SK-N-SH (cell line): ENCODE measurements at regions of chr2 and their contacts with region 1.

Region 1: GRCh38 chr2:71798266-71799012 is 345.1 kb downstream of the DYSF start:
- DNase-seq: peak; percentile 64
- H3K4me3 ChIP-seq: no peak overlapping the region
- H3K27ac ChIP-seq: no peak overlapping the region
- H3K4me1 ChIP-seq: peaks cover 0 to 10% of the 10 kb centered on the region in 2 experiments; a peak in 1 of 4 replicates
- H3K27me3 ChIP-seq: no peaks in the 10 kb centered on the region
- CTCF ChIP-seq: peak; percentile 78
- EP300 ChIP-seq: no peak
- RAD21 ChIP-seq: peak; percentile 61

Region 2: GRCh38 chr2:71545572-71546274 is 252.7 kb before region 1 on chr2:
- CTCF ChIA-PET with region 1: interaction called, 33 read pairs
- POLR2A ChIA-PET with region 1: no interaction called
- DNase-seq: peak; percentile 82
- H3K4me3 ChIP-seq: peak overlapping the region; percentile 12 to 19; a peak in 2 of 4 replicates
- H3K27ac ChIP-seq: no peak overlapping the region
- H3K4me1 ChIP-seq: no peaks in the 10 kb centered on the region; a peak in 1 of 4 replicates
- H3K27me3 ChIP-seq: no peaks in the 10 kb centered on the region; the same call in 1 of the 2 replicates
- CTCF ChIP-seq: peak; percentile 81
- EP300 ChIP-seq: no peak
- RAD21 ChIP-seq: peak; percentile 97

Region 3: GRCh38 chr2:71558300-71559051 is 240.0 kb before region 1 on chr2:
- CTCF ChIA-PET with region 1: interaction called, 13 read pairs
- POLR2A ChIA-PET with region 1: no interaction called
- DNase-seq: no peak
- H3K4me3 ChIP-seq: no peak overlapping the region
- H3K27ac ChIP-seq: no peak overlapping the region
- H3K4me1 ChIP-seq: peaks cover 0 to 29% of the 10 kb centered on the region in 2 experiments; a peak in 1 of 4 replicates
- H3K27me3 ChIP-seq: peaks cover 7% of the 10 kb centered on the region; the same call in 1 of the 2 replicates
- CTCF ChIP-seq: no peak
- EP300 ChIP-seq: no peak
- RAD21 ChIP-seq: no peak

Region 4: GRCh38 chr2:71609958-71610357 is 188.5 kb before region 1 on chr2:
- CTCF ChIA-PET with region 1: interaction called, 26 read pairs
- POLR2A ChIA-PET with region 1: no interaction called
- DNase-seq: peak; percentile 56
- H3K4me3 ChIP-seq: no peak overlapping the region
- H3K27ac ChIP-seq: no peak overlapping the region
- H3K4me1 ChIP-seq: peaks cover 0 to 5% of the 10 kb centered on the region in 2 experiments; a peak in 1 of 4 replicates
- H3K27me3 ChIP-seq: no peaks in the 10 kb centered on the region
- CTCF ChIP-seq: peak; percentile 51
- EP300 ChIP-seq: no peak
- RAD21 ChIP-seq: peak; percentile 63

Region 5: GRCh38 chr2:71784734-71785473 is 13.5 kb before region 1 on chr2:
- CTCF ChIA-PET with region 1: interaction called, 22 read pairs
- POLR2A ChIA-PET with region 1: no interaction called
- DNase-seq: peak; percentile 8
- H3K4me3 ChIP-seq: no peak overlapping the region
- H3K27ac ChIP-seq: no peak overlapping the region
- H3K4me1 ChIP-seq: no peaks in the 10 kb centered on the region; a peak in 1 of 4 replicates
- H3K27me3 ChIP-seq: no peaks in the 10 kb centered on the region
- CTCF ChIP-seq: no peak
- EP300 ChIP-seq: no peak
- RAD21 ChIP-seq: no peak

Region 6: GRCh38 chr2:71812736-71813135 is 14.3 kb after region 1 on chr2:
- CTCF ChIA-PET with region 1: interaction called, 12 read pairs
- POLR2A ChIA-PET with region 1: no interaction called
- DNase-seq: no peak
- H3K4me3 ChIP-seq: no peak overlapping the region
- H3K27ac ChIP-seq: no peak overlapping the region
- H3K4me1 ChIP-seq: no peaks in the 10 kb centered on the region; a peak in 1 of 4 replicates
- H3K27me3 ChIP-seq: no peaks in the 10 kb centered on the region
- CTCF ChIP-seq: no peak
- EP300 ChIP-seq: no peak
- RAD21 ChIP-seq: no peak